Activated T-helper 2 cell treated with anti-CD3 and anti-CD28 coated beads, Interferon-gamma antibody, Interleukin-2, Interleukin-4, amounts not matched to agents 10 μg/mL and 5 μg/mL and 100 μg/mL, durations not matched to agents 14 hours and 24 hours and 36 hours (primary cell): ENCODE measurements at regions of chr10 and their contacts with region 1.

Region 1: GRCh38 chr10:62851442-62851841 is 35.3 kb upstream of the EGR2 start:
- DNase-seq: no peak
- H3K4me3 Mint-ChIP-seq: no peak overlapping the region
- H3K27ac Mint-ChIP-seq: peak overlapping the region; percentile 28
- H3K4me1 Mint-ChIP-seq: peaks cover 59% of the 10 kb centered on the region
- H3K27me3 Mint-ChIP-seq: no peaks in the 10 kb centered on the region

Region 2: DNA sequence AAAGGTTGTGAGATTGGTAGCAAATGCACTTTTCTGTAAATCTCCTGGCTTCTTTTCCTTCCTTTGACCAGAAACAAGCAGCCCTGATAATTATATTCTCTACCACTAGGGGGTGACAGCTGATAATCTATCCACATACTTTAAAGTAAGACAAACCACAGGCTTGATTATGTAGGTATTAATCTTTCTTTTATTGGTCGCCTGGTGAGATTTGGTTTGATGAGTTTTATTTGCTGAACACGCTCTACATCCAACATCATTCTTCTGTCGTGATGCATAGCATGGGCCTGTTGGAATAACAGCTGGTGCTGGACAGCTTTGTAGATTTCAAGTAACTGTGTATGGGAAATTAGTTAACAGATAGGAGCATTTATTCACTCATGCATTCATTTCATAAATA is 413.7 kb before region 1 on chr10:
- intact Hi-C with region 1: loop called (anchors 10 kb)
- DNase-seq: no peak
- H3K4me3 Mint-ChIP-seq: no peak overlapping the region
- H3K27ac Mint-ChIP-seq: no peak overlapping the region
- H3K4me1 Mint-ChIP-seq: peaks cover 12% of the 10 kb centered on the region
- H3K27me3 Mint-ChIP-seq: peaks cover 50% of the 10 kb centered on the region

Region 3: DNA sequence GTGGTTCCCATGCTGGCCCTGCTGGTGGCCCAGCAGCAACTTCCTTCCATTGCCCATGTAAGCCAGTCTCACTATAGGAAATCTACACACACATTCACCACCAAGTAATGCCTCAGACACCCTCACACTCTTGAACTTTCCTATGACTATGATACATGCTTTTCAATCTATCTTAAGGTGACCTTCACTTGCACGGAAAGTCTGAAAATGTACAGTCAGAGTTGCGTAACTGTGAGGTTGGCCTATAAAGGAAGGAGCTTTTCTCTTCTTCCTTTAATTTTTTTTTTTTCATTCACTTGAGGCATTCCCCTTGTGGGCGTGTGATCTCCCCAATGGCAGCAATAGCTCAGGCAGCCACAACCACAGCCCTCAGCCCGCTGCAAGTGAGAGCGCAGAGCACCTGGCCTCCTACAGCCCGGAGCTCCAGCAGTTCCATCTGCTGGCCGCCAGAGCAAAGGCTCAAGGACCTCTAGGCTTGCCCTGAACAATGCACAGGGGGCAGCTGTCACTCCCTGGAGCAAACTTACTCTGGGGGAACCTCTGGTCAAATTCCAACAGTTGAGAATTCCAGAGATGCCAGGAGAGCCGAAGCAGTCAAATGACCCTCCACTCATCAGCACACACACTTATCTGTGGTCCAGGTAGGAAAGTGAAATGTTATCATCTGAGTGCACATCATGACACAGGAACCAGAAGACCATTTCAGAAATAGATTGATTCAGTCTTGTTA is 170.1 kb before region 1 on chr10:
- intact Hi-C with region 1: loop called (anchors 1 kb)
- DNase-seq: peak; percentile 63
- H3K4me3 Mint-ChIP-seq: no peak overlapping the region
- H3K27ac Mint-ChIP-seq: peak overlapping the region; percentile 58
- H3K4me1 Mint-ChIP-seq: peaks cover 45% of the 10 kb centered on the region
- H3K27me3 Mint-ChIP-seq: no peaks in the 10 kb centered on the region

Region 4: GRCh38 chr10:62769574-62770242 is 81.7 kb before region 1 on chr10:
- intact Hi-C with region 1: no loop called
- DNase-seq: no peak
- H3K4me3 Mint-ChIP-seq: no peak overlapping the region
- H3K27ac Mint-ChIP-seq: no peak overlapping the region
- H3K4me1 Mint-ChIP-seq: peaks cover 28% of the 10 kb centered on the region
- H3K27me3 Mint-ChIP-seq: peaks cover 11% of the 10 kb centered on the region

Region 5: GRCh38 chr10:62980687-62981086 is 129.2 kb after region 1 on chr10:
- intact Hi-C with region 1: loop called (anchors 1 kb)
- DNase-seq: no peak
- H3K4me3 Mint-ChIP-seq: no peak overlapping the region
- H3K27ac Mint-ChIP-seq: peak overlapping the region; percentile 88
- H3K4me1 Mint-ChIP-seq: peaks cover 44% of the 10 kb centered on the region
- H3K27me3 Mint-ChIP-seq: no peaks in the 10 kb centered on the region

Region 6: GRCh38 chr10:63157845-63158624 is 306.6 kb after region 1 on chr10:
- intact Hi-C with region 1: loop called (anchors 2 kb)
- DNase-seq: peak; percentile 25
- H3K4me3 Mint-ChIP-seq: no peak overlapping the region
- H3K27ac Mint-ChIP-seq: no peak overlapping the region
- H3K4me1 Mint-ChIP-seq: peaks cover 27% of the 10 kb centered on the region
- H3K27me3 Mint-ChIP-seq: no peaks in the 10 kb centered on the region